ENCODE measurements at regions of chr15 and their contacts with region 1.

Region 1: DNA sequence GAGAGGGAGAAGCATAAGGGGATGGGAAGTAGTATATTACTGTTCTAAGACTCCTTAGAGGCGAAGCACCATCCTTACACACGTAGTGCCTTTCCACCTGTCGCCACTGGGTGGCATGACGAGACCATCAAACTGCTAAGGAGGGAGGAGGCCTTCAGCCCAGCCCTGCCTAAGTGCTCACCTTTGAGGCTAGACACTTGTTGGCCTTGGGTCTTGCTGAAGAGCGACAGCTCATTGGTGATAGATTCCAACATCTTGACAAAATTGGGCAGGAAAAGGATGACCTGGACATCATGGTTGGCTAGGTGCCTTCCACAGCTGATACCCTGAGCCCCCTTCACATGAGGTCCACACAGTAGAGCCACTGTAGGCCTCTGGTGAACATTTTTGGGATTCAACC is 19.6 kb downstream of the CLK3 start:
- DNase-seq: peak; percentile 84
- ATAC-seq: peak; percentile 90
- H3K4me3 Mint-ChIP-seq: no peak overlapping the region
- H3K27ac Mint-ChIP-seq: no peak overlapping the region
- H3K4me1 Mint-ChIP-seq: no peaks in the 10 kb centered on the region
- H3K27me3 Mint-ChIP-seq: no peaks in the 10 kb centered on the region

Region 2: GRCh38 chr15:74322181-74323076 is 312.8 kb before region 1 on chr15:
- CTCF ChIA-PET with region 1: no interaction called
- DNase-seq: peak; percentile 81
- ATAC-seq: peak; percentile 89
- H3K4me3 Mint-ChIP-seq: no peak overlapping the region
- H3K27ac Mint-ChIP-seq: no peak overlapping the region
- H3K4me1 Mint-ChIP-seq: peaks cover 18% of the 10 kb centered on the region
- H3K27me3 Mint-ChIP-seq: no peaks in the 10 kb centered on the region

Region 3: DNA sequence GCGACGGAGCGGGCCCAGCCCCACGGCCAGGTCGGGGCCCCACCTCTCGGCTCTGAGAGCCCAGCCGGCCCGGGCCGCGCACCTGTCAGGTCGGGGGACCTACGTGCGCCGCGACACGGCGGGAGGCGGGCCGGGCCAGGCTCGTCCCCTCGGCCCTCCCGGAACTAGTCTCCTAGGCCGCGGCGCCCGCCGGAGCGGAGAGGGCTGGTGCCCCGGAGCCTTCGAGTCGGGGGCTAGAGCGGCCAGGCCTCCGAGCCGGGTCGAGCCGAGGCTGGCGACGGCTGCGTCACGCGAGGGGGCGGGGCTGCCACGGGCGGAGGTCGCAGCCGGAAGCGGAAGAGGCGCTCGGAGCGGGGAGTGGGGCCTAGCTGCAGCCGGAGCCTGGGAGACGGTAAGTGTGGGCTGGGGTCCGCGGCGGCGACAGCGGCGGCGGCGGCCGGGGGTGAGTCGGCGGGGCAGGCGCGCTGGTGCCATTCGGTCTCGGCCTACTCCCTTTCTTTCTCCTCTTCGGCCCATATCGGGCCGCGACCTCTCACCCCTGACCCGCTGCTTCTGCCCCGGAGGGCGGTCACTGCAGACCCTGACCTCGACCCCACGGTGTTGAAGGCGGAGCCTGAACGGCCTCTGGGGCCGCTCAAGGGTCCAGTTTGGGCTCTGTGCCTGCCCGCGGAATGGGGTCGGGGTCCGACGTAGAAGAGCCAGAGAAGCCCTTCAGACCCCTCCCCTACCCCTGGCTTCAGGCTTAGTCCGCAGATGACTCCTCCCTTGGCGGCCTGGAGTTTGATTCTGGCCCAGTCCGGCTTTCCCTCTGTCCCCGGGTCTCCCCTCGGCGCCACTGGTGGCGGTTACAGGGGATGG is 19.5 kb before region 1 on chr15 and contains the start of gene CLK3:
- CTCF ChIA-PET with region 1: interaction called, 172 read pairs
- DNase-seq: peak; percentile 97
- ATAC-seq: peak; percentile 85
- H3K4me3 Mint-ChIP-seq: peak within 1 kb of the TSS; percentile 92
- H3K27ac Mint-ChIP-seq: peak within 1 kb of the TSS; percentile 97
- H3K4me1 Mint-ChIP-seq: peaks cover 38% of the 10 kb centered on the region
- H3K27me3 Mint-ChIP-seq: no peaks in the 10 kb centered on the region
- total RNA-seq, gene CLK3: 120 to 140 TPM

Region 4: GRCh38 chr15:74648166-74648842 is 13.1 kb after region 1 on chr15:
- CTCF ChIA-PET with region 1: interaction called, 16 read pairs
- DNase-seq: no peak
- ATAC-seq: no peak
- H3K4me3 Mint-ChIP-seq: no peak overlapping the region
- H3K27ac Mint-ChIP-seq: no peak overlapping the region
- H3K4me1 Mint-ChIP-seq: no peaks in the 10 kb centered on the region
- H3K27me3 Mint-ChIP-seq: no peaks in the 10 kb centered on the region

Region 5: GRCh38 chr15:74653426-74654123 is 18.3 kb after region 1 on chr15:
- CTCF ChIA-PET with region 1: interaction called, 16 read pairs
- DNase-seq: no peak
- ATAC-seq: no peak
- H3K4me3 Mint-ChIP-seq: no peak overlapping the region
- H3K27ac Mint-ChIP-seq: peak overlapping the region; percentile 52
- H3K4me1 Mint-ChIP-seq: peaks cover 42% of the 10 kb centered on the region
- H3K27me3 Mint-ChIP-seq: no peaks in the 10 kb centered on the region

Region 6: DNA sequence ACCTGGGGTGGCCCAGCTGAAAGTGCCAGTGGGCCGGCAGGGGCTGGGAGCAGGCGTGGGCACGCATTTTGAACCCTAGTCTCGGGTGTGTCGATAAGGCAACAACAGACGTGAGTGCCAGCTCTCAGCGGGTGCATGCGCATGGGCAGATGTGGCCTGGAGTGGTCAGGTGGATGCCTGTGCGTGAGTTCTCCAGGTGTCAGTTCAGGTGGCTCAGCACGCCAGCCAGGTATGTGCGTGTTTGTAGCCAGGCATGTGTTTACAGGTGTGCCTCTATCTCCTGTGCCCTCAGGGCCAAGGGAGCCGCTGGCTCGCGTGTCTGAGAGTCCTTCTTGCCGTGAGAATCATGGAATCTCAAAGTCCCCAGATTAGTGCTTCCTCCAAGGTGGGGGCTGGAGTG is 128.2 kb after region 1 on chr15:
- CTCF ChIA-PET with region 1: interaction called, 401 read pairs
- DNase-seq: no peak
- ATAC-seq: no peak
- H3K4me3 Mint-ChIP-seq: no peak overlapping the region
- H3K27ac Mint-ChIP-seq: no peak overlapping the region
- H3K4me1 Mint-ChIP-seq: no peaks in the 10 kb centered on the region
- H3K27me3 Mint-ChIP-seq: no peaks in the 10 kb centered on the region

Region 7: GRCh38 chr15:74781431-74782258 is 146.4 kb after region 1 on chr15 and contains the start of gene CSK:
- CTCF ChIA-PET with region 1: interaction called, 11 read pairs
- DNase-seq: peak; percentile 84
- ATAC-seq: peak; percentile 62
- H3K4me3 Mint-ChIP-seq: peak within 1 kb of the TSS; percentile 87
- H3K27ac Mint-ChIP-seq: peak within 1 kb of the TSS; percentile 98
- H3K4me1 Mint-ChIP-seq: peaks cover 64% of the 10 kb centered on the region
- H3K27me3 Mint-ChIP-seq: no peaks in the 10 kb centered on the region
- total RNA-seq, gene CSK: 349 to 369 TPM

Region 8: DNA sequence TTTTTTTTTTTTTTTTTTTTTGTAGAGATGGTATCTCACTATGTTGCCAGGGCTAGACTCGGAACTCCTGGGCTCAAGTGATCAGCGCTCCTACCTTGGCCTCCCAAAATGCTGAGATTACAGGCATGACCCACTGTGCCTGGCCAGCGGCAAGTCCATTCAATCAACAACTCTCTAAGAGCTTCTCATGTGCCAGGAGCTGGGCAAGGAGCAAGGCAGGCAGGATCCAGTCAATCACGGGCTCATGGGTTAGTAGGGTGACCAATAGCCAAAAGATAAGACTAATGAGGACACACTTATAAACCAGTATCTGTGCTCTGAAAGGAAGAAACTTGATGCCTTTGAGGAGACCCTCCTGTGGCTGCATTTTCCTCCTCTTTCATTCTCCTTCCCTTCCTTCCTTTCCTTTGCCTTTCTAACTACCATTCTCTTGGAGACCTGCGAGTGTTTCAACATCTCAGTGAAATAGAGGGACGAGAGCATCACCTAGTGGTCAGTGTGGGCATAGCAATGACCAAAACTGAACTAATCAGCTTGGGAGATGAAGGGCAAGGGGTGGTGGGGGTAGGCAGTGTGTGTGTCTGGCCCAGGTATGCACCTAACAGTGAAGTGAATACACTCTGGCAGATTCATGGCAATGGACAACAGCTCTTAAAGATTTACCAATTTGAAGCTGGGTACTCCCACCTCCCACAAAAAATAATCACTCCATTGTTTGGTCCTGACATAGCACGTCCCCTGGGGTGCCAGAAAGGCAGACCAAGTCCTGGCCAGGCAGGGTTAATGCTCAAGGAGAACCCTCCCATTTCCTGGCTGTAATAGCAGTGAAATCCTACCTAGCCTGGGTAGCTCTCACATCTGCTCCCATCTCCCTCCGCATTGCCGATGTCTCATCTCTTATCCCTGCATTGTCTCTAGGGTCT is 315.1 kb after region 1 on chr15:
- CTCF ChIA-PET with region 1: interaction called, 11 read pairs
- DNase-seq: peak; percentile 86
- ATAC-seq: peak; percentile 80
- H3K4me3 Mint-ChIP-seq: no peak overlapping the region
- H3K27ac Mint-ChIP-seq: no peak overlapping the region
- H3K4me1 Mint-ChIP-seq: peaks cover 9% of the 10 kb centered on the region
- H3K27me3 Mint-ChIP-seq: no peaks in the 10 kb centered on the region

Measured in activated CD8-positive, alpha-beta memory T cell treated with anti-CD3 and anti-CD28 coated beads, Interleukin-2, amount 10 ng/mL, durations not matched to agents 7 days and 5 days (primary cell).